ENCODE measurements at regions of chr18 and their contacts with region 1.

Region 1: DNA sequence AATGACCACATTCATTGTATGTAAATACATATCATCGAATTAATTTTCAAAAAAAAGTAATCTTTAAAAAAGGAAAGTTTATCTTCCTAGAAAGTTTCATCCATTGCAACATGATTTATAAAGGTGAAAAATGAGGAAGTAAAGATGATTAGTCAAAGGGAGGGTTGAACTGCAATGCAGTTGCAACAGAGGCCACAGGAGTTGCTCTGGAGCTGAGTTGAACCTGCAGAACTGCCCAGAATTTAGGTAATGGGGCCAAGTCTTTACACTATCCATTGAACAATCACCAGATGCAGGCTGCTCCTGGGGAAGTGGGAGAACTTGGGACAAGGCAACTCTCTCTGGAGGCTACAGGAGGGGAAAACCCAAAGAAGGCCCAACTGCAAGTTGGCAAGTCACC is 390.7 kb downstream of the METTL4 start:
- DNase-seq: no peak
- ATAC-seq: no peak
- H3K4me3 ChIP-seq: no peak overlapping the region
- H3K27ac ChIP-seq: no peak overlapping the region
- H3K4me1 ChIP-seq: no peaks in the 10 kb centered on the region
- H3K27me3 ChIP-seq: peaks cover 0 to 3% (median 0%) of the 10 kb centered on the region in 9 donors
- CTCF ChIP-seq: no peak
- POLR2A ChIP-seq: no peak

Region 2: GRCh38 chr18:2147476-2148230 is 32.9 kb before region 1 on chr18:
- intact Hi-C with region 1: loop called in 1 of 10 experiments (anchors 5 kb)
- DNase-seq: peak in 3 of 5 donors; percentile 36 to 55 (median 38)
- ATAC-seq: peak in 2 of 4 donors; percentile 24 to 65
- H3K4me3 ChIP-seq: no peak overlapping the region
- H3K27ac ChIP-seq: no peak overlapping the region
- H3K4me1 ChIP-seq: no peaks in the 10 kb centered on the region
- H3K27me3 ChIP-seq: no peaks in the 10 kb centered on the region
- CTCF ChIP-seq: no peak
- POLR2A ChIP-seq: no peak

Region 3: GRCh38 chr18:2240311-2240705 is 59.7 kb after region 1 on chr18:
- intact Hi-C with region 1: no loop called
- DNase-seq: no peak
- ATAC-seq: no peak
- H3K4me3 ChIP-seq: no peak overlapping the region
- H3K27ac ChIP-seq: no peak overlapping the region
- H3K4me1 ChIP-seq: no peaks in the 10 kb centered on the region
- H3K27me3 ChIP-seq: peaks cover 0 to 33% (median 9%) of the 10 kb centered on the region in 9 donors
- CTCF ChIP-seq: no peak
- POLR2A ChIP-seq: no peak